ENCODE measurements at regions of chr1 and their contacts with region 1.

Region 1: GRCh38 chr1:22153660-22154437 is 11.0 kb upstream of the WNT4 start:
- DNase-seq: no peak
- ATAC-seq: no peak
- H3K4me3 ChIP-seq: no peak overlapping the region
- H3K4me3 Mint-ChIP-seq: no peak overlapping the region
- H3K27ac ChIP-seq: no peak overlapping the region
- H3K27ac Mint-ChIP-seq: no peak overlapping the region
- H3K4me1 ChIP-seq: no peaks in the 10 kb centered on the region
- H3K4me1 Mint-ChIP-seq: no peaks in the 10 kb centered on the region
- H3K27me3 ChIP-seq: peaks cover 2 to 54% of the 10 kb centered on the region in 2 experiments
- H3K27me3 Mint-ChIP-seq: peaks cover 28 to 35% of the 10 kb centered on the region in 2 donors

Region 2: DNA sequence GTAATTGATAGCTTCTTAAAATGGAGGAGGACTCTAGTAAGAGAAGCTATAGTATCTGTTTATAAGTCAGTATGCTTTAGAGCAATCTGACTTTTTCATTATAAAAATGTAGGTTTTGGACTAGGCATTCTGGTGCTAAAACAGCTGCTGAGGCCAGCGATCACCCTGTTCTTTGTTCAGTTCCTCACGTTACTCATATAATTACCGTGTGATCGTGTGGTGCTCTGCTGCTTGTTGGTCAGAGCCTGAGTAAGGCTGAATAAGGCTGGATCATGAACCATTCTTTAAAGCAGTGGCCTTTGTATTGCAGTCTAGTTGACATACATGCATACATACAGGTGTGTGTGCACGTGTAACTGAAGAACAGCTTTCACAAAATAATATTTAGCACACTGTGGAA is 76.1 kb before region 1 on chr1:
- CTCF ChIA-PET with region 1: no interaction called
- POLR2A ChIA-PET with region 1: no interaction called
- DNase-seq: no peak
- ATAC-seq: no peak
- H3K4me3 ChIP-seq: no peak overlapping the region
- H3K4me3 Mint-ChIP-seq: peak overlapping the region in 2 of 3 donors; percentile 31 to 61
- H3K27ac ChIP-seq: no peak overlapping the region
- H3K27ac Mint-ChIP-seq: peak overlapping the region; percentile 71 to 73
- H3K4me1 ChIP-seq: peaks cover 50 to 66% of the 10 kb centered on the region in 2 experiments
- H3K4me1 Mint-ChIP-seq: peaks cover 94 to 96% (median 95%) of the 10 kb centered on the region in 3 donors
- H3K27me3 ChIP-seq: no peaks in the 10 kb centered on the region
- H3K27me3 Mint-ChIP-seq: no peaks in the 10 kb centered on the region

Region 3: GRCh38 chr1:22139066-22139594 is 14.7 kb before region 1 on chr1:
- CTCF ChIA-PET with region 1: interaction called in 1 of 2 experiments, 13 read pairs
- POLR2A ChIA-PET with region 1: no interaction called
- DNase-seq: no peak
- ATAC-seq: no peak
- H3K4me3 ChIP-seq: no peak overlapping the region
- H3K4me3 Mint-ChIP-seq: no peak overlapping the region
- H3K27ac ChIP-seq: no peak overlapping the region
- H3K27ac Mint-ChIP-seq: no peak overlapping the region
- H3K4me1 ChIP-seq: peaks cover 0 to 15% of the 10 kb centered on the region in 2 experiments
- H3K4me1 Mint-ChIP-seq: peaks cover 7 to 8% (median 8%) of the 10 kb centered on the region in 3 donors
- H3K27me3 ChIP-seq: peaks cover 14 to 67% of the 10 kb centered on the region in 2 experiments
- H3K27me3 Mint-ChIP-seq: peaks cover 15 to 30% of the 10 kb centered on the region in 2 donors

Region 4: DNA sequence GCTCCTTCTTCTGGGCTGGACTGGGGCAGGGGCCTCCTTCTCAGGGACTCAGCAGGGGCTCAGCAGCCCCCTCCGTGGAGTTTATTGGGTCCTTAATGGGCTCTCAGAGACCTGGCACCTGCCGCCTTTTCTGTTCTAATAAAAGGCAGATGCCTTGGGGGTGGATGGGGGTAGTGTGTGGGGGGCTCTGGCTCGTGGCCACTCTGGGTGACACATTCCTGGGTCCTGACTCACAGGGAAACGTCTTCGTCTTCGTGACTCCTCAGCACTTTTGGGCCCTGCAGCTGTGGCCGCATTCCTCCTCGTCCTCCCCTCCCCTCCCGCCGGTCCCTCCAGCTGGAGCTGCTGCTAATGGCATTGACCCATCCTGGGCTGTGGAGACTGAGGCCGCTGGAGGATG is 96.9 kb after region 1 on chr1:
- CTCF ChIA-PET with region 1: no interaction called
- POLR2A ChIA-PET with region 1: no interaction called
- DNase-seq: no peak
- ATAC-seq: no peak
- H3K4me3 ChIP-seq: no peak overlapping the region
- H3K4me3 Mint-ChIP-seq: no peak overlapping the region
- H3K27ac ChIP-seq: no peak overlapping the region
- H3K27ac Mint-ChIP-seq: no peak overlapping the region
- H3K4me1 ChIP-seq: no peaks in the 10 kb centered on the region
- H3K4me1 Mint-ChIP-seq: no peaks in the 10 kb centered on the region
- H3K27me3 ChIP-seq: peaks cover 0 to 60% of the 10 kb centered on the region in 2 experiments
- H3K27me3 Mint-ChIP-seq: peaks cover 32 to 38% of the 10 kb centered on the region in 2 donors

Measured in T-cell (primary cell).